CD4-positive, alpha-beta T cell (primary cell): ENCODE measurements at regions of chr15 and their contacts with region 1.

Region 1: GRCh38 chr15:101008158-101009139 is 89.3 kb downstream of the LRRK1 start:
- DNase-seq: peak; percentile 76 to 93 (median 84)
- ATAC-seq: peak; percentile 97
- H3K4me3 ChIP-seq: peak overlapping the region; percentile 69
- H3K4me3 Mint-ChIP-seq: peak overlapping the region; percentile 94
- H3K27ac ChIP-seq: no peak overlapping the region
- H3K27ac Mint-ChIP-seq: peak overlapping the region; percentile 65
- H3K4me1 ChIP-seq: peaks cover 22% of the 10 kb centered on the region
- H3K4me1 Mint-ChIP-seq: peaks cover 24% of the 10 kb centered on the region
- H3K27me3 ChIP-seq: no peaks in the 10 kb centered on the region
- H3K27me3 Mint-ChIP-seq: peaks cover 6% of the 10 kb centered on the region
- CTCF ChIP-seq: peak; percentile 99

Region 2: DNA sequence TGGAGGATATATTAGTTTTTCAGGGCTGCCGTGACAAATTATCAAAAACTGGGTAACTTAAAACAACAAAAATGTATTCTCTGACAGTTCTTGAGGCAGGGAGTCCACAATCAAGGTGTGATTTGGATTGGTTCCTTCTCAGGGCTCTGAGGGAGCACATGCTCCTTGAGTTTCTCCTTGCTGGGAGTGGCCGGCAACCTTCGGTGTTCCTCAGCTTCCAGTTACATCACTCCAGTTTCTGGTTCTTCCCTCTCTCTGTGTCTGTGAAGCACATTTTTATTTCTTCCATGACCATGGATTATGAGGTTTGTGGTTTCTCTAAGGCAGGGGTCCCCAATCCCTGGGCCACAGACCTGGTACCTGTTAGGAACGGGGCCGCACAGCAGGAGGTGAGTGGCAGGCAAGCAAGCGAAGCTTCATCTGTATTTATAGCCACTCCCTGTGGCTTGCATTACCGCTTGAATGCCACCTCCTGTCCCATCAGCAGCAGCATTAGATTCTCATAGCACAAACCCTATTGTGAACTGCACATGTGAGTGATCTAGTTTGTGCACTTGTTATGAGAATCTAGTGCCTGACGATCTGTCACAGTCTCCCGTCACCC is 1732.8 kb before region 1 on chr15:
- CTCF ChIA-PET with region 1: no interaction called
- POLR2A ChIA-PET with region 1: no interaction called
- intact Hi-C with region 1: loop called in 1 of 2 experiments (anchors 5 kb)
- DNase-seq: no peak
- ATAC-seq: no peak
- H3K4me3 ChIP-seq: no peak overlapping the region
- H3K4me3 Mint-ChIP-seq: no peak overlapping the region
- H3K27ac ChIP-seq: no peak overlapping the region
- H3K27ac Mint-ChIP-seq: no peak overlapping the region
- H3K4me1 ChIP-seq: no peaks in the 10 kb centered on the region
- H3K4me1 Mint-ChIP-seq: peaks cover 29% of the 10 kb centered on the region
- H3K27me3 ChIP-seq: no peaks in the 10 kb centered on the region
- H3K27me3 Mint-ChIP-seq: no peaks in the 10 kb centered on the region
- CTCF ChIP-seq: no peak

Region 3: DNA sequence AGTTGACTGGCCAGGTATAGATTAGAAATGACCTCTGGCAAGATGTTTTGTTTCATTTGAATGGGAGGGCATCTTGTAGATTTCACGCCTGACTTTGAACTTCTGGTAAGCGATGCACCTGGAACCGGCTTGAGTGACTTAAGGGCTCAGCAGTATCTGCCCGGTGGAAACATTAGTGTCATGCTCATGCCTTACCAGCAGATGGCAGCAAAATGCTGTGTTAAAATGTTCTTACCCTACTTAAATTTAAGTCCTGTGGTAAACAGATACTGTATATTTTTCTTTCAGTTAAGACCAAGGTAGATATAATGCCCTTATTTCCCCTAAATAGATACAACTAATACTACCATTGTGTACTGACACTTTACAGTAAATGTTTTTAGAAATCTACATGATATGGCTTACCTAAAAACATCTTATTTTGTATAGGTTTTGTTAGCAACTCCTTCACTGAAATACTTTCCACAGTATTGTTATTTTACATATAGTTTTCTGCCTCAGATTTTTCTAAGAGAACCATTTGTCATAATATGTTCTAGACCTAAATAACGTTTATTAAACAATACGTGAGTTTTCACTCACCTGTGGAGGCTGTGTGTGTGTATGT is 380.6 kb before region 1 on chr15:
- CTCF ChIA-PET with region 1: interaction called, 12 read pairs
- POLR2A ChIA-PET with region 1: no interaction called
- intact Hi-C with region 1: loop called (anchors 1 kb)
- DNase-seq: peak; percentile 43 to 85 (median 54)
- ATAC-seq: peak; percentile 92
- H3K4me3 ChIP-seq: no peak overlapping the region
- H3K4me3 Mint-ChIP-seq: no peak overlapping the region
- H3K27ac ChIP-seq: no peak overlapping the region
- H3K27ac Mint-ChIP-seq: no peak overlapping the region
- H3K4me1 ChIP-seq: peaks cover 8% of the 10 kb centered on the region
- H3K4me1 Mint-ChIP-seq: peaks cover 31% of the 10 kb centered on the region
- H3K27me3 ChIP-seq: no peaks in the 10 kb centered on the region
- H3K27me3 Mint-ChIP-seq: no peaks in the 10 kb centered on the region
- CTCF ChIP-seq: peak; percentile 96

Region 4: GRCh38 chr15:100918034-100918689 is 90.3 kb before region 1 on chr15:
- CTCF ChIA-PET with region 1: interaction called, 20 read pairs
- POLR2A ChIA-PET with region 1: interaction called, 6 read pairs
- intact Hi-C with region 1: loop called (anchors 1 to 2 kb)
- DNase-seq: peak; percentile 17 to 75 (median 54)
- ATAC-seq: peak; percentile 86
- H3K4me3 ChIP-seq: peak overlapping the region; percentile 53
- H3K4me3 Mint-ChIP-seq: peak overlapping the region; percentile 86
- H3K27ac ChIP-seq: no peak overlapping the region
- H3K27ac Mint-ChIP-seq: no peak overlapping the region
- H3K4me1 ChIP-seq: peaks cover 18% of the 10 kb centered on the region
- H3K4me1 Mint-ChIP-seq: peaks cover 5% of the 10 kb centered on the region
- H3K27me3 ChIP-seq: peaks cover 37 to 48% of the 10 kb centered on the region in 2 experiments
- H3K27me3 Mint-ChIP-seq: peaks cover 81% of the 10 kb centered on the region
- CTCF ChIP-seq: peak; percentile 65

Region 5: DNA sequence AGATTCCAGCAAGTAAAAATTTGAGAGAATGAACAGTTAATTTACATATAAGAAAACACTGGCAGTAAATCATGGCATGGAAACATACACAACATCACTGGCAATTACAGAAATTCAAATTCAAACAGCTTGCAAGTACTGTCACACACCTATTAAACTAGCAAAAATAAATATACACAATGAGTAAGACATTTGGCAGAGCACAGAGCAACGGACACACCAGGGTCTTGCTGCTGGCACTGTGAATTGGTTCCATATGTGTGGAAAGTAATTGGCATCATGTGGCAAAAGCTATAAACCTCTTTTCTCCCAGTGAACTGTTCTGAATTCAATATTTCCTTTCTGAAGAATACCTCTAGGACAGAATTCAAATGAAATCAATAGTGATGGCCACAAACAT is 11.0 kb before region 1 on chr15:
- CTCF ChIA-PET with region 1: interaction called, 21 read pairs
- POLR2A ChIA-PET with region 1: no interaction called
- intact Hi-C with region 1: no loop called
- DNase-seq: no peak
- ATAC-seq: no peak
- H3K4me3 ChIP-seq: no peak overlapping the region
- H3K4me3 Mint-ChIP-seq: no peak overlapping the region
- H3K27ac ChIP-seq: no peak overlapping the region
- H3K27ac Mint-ChIP-seq: no peak overlapping the region
- H3K4me1 ChIP-seq: no peaks in the 10 kb centered on the region
- H3K4me1 Mint-ChIP-seq: no peaks in the 10 kb centered on the region
- H3K27me3 ChIP-seq: peaks cover 8 to 9% of the 10 kb centered on the region in 2 experiments
- H3K27me3 Mint-ChIP-seq: peaks cover 24% of the 10 kb centered on the region
- CTCF ChIP-seq: no peak

Region 6: GRCh38 chr15:101078682-101079323 is 70.4 kb after region 1 on chr15:
- CTCF ChIA-PET with region 1: no interaction called
- POLR2A ChIA-PET with region 1: no interaction called
- intact Hi-C with region 1: no loop called
- DNase-seq: no peak
- ATAC-seq: no peak
- H3K4me3 ChIP-seq: no peak overlapping the region
- H3K4me3 Mint-ChIP-seq: no peak overlapping the region
- H3K27ac ChIP-seq: no peak overlapping the region
- H3K27ac Mint-ChIP-seq: no peak overlapping the region
- H3K4me1 ChIP-seq: no peaks in the 10 kb centered on the region
- H3K4me1 Mint-ChIP-seq: no peaks in the 10 kb centered on the region
- H3K27me3 ChIP-seq: no peaks in the 10 kb centered on the region
- H3K27me3 Mint-ChIP-seq: no peaks in the 10 kb centered on the region
- CTCF ChIP-seq: no peak

Region 7: DNA sequence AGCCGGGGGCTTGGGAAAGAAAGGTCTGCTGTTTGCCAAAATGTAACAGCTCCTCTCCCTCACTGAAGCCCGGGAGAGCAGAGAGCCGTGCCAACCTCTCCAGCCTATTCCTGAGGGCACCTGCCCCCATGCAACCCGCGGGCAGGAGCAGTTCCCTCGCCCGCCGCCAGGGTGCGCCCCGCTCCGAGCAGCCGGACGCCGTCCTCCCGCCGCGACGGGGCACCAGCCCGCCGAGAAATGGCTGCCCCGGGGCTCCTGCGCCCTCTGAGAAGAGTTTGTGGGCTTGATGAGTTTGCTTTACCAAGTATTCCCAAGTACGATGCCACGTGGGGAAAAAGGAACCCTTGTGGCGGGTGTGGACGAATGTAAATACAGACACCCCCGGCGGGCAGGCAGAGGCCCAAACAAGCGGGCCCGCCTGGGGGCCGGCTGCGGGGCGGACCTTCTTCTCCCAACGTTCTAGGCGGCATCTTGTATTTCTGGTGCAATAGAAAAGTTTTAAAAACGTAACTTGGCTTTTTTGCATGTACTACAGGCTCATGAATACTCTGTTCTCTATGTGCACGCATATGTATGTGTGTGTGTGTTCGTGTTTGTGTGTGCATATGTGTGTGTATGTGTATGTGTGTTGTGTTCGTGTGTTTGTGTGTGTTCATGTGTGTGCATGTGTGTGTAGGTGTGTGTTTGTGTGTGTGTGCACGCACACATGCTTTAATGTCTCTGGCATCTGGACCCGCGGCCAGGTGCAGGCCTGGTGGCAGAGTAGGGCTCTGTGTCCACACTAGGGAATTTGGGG is 80.5 kb after region 1 on chr15:
- CTCF ChIA-PET with region 1: no interaction called
- POLR2A ChIA-PET with region 1: no interaction called
- intact Hi-C with region 1: loop called in 1 of 2 experiments (anchors 5 kb)
- DNase-seq: peak; percentile 49 to 88 (median 76)
- ATAC-seq: peak; percentile 96
- H3K4me3 ChIP-seq: no peak overlapping the region
- H3K4me3 Mint-ChIP-seq: no peak overlapping the region
- H3K27ac ChIP-seq: no peak overlapping the region
- H3K27ac Mint-ChIP-seq: no peak overlapping the region
- H3K4me1 ChIP-seq: peaks cover 7% of the 10 kb centered on the region
- H3K4me1 Mint-ChIP-seq: no peaks in the 10 kb centered on the region
- H3K27me3 ChIP-seq: peaks cover 0 to 5% of the 10 kb centered on the region in 2 experiments
- H3K27me3 Mint-ChIP-seq: no peaks in the 10 kb centered on the region
- CTCF ChIP-seq: peak; percentile 91